PC-9 (cell line): ENCODE measurements at regions of chr22 and their contacts with region 1.

Region 1: GRCh38 chr22:19854778-19855503 is at the starts of genes GNB1L and RTL10:
- DNase-seq: peak; percentile 79 to 92
- H3K4me3 ChIP-seq: peak within 1 kb of the TSS; percentile 96
- H3K27ac ChIP-seq: peak within 1 kb of the TSS; percentile 18; the same call in 1 of the 2 replicates
- H3K4me1 ChIP-seq: peaks cover 33% of the 10 kb centered on the region
- H3K27me3 ChIP-seq: no peaks in the 10 kb centered on the region
- CTCF ChIP-seq: no peak
- total RNA-seq, gene GNB1L: 10.3 and 13.9 TPM in 2 replicates
- total RNA-seq, gene RTL10: 20.9 and 23.5 TPM in 2 replicates

Region 2: DNA sequence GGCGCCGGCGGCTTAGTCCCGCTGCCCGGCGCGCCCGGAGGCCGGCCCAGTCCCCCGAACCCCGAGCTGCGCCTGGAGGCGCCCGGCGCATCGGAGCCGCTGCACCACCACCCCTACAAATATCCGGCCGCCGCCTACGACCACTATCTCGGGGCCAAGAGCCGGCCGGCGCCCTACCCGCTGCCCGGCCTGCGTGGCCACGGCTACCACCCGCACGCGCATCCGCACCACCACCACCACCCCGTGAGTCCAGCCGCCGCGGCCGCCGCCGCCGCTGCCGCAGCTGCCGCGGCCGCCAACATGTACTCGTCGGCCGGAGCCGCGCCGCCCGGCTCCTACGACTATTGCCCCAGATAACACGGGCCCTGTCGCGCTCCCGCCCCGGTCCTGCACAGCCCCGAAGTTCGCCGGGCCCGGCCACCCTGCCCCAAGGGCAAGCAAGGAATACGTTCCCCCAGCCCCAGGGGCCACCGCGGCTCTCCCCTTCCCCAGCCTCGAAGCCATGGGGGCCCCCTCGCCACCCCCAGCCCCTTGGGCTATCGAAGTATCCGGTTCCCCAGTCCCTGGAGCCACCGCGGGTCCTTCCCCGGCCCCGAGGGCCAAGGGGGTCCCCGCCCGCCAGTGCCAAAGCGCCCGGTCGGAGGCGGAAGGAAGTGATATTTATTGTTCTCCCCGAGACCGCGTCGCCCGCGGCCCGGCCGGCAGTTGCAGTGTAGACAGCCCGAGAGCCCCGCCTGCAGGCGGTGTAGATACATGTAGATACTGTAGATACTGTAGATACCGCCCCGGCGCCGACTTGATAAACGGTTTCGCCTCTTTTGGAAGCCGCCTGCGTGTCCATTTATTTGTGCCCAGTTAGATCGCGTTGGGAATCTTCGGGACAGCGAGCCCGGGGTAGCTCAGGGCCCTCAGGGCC is 88.2 kb before region 1 on chr22:
- CTCF ChIA-PET with region 1: no interaction called
- POLR2A ChIA-PET with region 1: no interaction called
- intact Hi-C with region 1: loop called (anchors 5 kb)
- DNase-seq: peak in 1 of 2 experiments; percentile 54
- H3K4me3 ChIP-seq: peak overlapping the region; percentile 48; the same call in 1 of the 2 replicates
- H3K27ac ChIP-seq: no peak overlapping the region
- H3K4me1 ChIP-seq: peaks cover 7% of the 10 kb centered on the region; the same call in 1 of the 2 replicates
- H3K27me3 ChIP-seq: peaks cover 29% of the 10 kb centered on the region
- CTCF ChIP-seq: peak; percentile 46; the same call in 1 of the 2 replicates

Region 3: DNA sequence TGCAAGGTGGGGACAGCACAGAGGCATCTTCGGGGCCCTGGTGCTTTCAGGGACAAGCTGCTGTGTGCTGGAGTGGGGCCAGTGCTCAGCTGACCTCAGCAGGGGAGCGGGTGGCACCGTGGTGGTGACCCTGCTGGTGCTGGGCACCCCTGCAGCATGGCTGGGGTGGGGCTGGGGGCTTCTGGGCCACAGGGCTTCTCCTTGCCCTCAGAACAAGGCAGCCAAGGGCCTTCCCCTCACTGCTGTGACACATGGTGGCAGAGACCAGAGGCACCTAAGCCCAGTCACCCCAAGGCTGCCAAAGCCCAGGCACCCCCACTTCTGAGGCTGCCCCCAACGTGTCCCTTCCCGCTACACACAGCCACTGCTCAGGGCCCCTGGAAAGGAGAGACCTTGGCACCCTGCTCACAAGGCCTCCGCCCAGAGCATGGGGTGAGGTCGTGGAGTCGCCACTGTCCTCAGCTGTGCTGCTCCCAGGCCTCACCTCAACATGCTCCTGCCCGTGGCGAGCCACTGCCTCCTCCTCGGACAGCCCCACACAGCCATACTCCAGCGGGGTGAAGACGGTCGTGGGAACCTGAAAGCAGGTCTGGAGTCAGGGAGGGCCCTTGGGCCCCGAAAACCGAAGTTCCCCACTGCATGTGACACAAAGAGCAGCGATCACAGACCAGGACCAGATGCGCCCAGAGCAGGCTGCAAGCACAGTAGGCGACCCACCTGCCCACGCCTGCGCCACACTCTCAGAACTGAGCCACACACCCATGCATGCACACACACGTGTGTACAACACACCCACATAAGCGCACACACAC is 25.0 kb after region 1 on chr22:
- CTCF ChIA-PET with region 1: no interaction called
- POLR2A ChIA-PET with region 1: no interaction called
- intact Hi-C with region 1: loop called (anchors 2 kb)
- DNase-seq: no peak
- H3K4me3 ChIP-seq: no peak overlapping the region
- H3K27ac ChIP-seq: no peak overlapping the region
- H3K4me1 ChIP-seq: peaks cover 25% of the 10 kb centered on the region
- H3K27me3 ChIP-seq: no peaks in the 10 kb centered on the region
- CTCF ChIP-seq: no peak

Region 4: DNA sequence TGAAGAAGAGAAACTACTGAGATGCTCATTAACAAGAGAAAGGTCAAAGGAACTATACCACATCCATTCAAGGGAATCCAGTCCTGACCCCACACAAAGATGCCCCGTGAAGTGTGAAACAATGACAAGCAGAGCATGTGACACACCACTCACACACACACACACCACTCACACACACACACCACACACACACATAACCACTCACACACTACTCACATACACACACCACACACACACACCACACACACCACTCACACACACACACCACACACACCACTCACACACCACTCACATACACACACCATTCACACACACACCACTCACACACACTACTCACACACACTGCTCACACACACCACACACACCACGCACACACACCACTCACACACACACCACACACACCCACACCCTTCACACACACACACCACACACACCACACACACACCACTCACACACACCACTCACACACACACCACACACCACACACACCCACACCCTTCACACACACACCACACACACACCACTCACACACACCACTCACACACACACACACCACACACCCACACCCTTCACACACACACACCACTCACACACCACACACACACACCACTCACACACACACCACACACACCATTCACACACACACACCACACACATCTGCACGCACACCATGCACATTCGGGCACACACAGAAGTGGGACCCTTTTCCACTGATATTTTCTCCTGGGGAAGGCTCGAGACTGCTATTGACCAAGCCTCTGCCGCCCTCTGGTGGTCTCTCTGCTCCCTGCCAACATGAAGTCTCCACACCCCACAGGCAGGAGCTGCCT is 54.6 kb after region 1 on chr22:
- CTCF ChIA-PET with region 1: no interaction called
- POLR2A ChIA-PET with region 1: no interaction called
- intact Hi-C with region 1: no loop called
- DNase-seq: peak in 1 of 2 experiments; percentile 66
- H3K4me3 ChIP-seq: no peak overlapping the region
- H3K27ac ChIP-seq: no peak overlapping the region
- H3K4me1 ChIP-seq: no peaks in the 10 kb centered on the region
- H3K27me3 ChIP-seq: no peaks in the 10 kb centered on the region
- CTCF ChIP-seq: peak; percentile 86

Region 5: GRCh38 chr22:20354238-20354975 is 499.5 kb after region 1 on chr22:
- CTCF ChIA-PET with region 1: no interaction called
- POLR2A ChIA-PET with region 1: no interaction called
- intact Hi-C with region 1: no loop called
- DNase-seq: no peak
- H3K4me3 ChIP-seq: no peak overlapping the region
- H3K27ac ChIP-seq: no peak overlapping the region
- H3K4me1 ChIP-seq: no peaks in the 10 kb centered on the region
- H3K27me3 ChIP-seq: no peaks in the 10 kb centered on the region
- CTCF ChIP-seq: no peak